Left ventricle myocardium superior (tissue), 1 donor: ENCODE measurements at regions of chr22 and their contacts with region 1.

Region 1: DNA sequence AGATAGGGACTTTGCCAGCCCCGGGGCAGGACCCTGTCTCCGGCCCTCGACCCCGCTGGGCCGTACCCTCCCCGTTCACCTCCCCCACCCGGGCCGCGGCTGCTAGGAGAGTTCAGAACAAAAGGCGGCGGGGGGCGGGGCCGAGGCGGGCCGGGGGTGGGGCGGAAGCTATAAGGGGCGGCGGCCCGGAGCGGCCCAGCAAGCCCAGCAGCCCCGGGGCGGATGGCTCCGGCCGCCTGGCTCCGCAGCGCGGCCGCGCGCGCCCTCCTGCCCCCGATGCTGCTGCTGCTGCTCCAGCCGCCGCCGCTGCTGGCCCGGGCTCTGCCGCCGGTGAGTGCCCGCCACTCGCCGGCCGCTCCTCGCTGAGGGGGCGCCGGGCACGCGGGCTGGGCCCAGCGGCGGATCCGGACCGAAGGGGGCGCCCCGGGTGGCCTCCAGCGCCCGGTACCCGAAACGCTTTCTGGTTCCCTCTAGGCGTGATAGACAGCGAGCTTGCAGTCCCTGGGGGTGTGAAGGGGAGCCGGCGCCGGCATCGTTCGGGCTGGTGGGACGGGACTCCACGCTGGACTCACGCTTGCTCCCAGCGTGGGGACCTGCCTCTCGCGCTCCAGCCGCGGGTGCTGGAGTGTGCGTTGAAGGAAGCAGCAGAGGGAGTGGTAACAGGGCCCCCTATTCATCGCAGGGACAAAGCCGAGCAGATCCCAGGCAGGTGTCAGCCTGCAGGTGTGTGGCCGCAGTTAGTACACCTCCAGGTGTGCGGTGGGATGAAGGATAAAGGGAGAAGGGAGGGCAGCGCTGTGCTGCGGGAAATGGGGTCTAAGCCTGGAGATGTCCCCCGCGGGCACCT is at the start of gene MMP11:
- DNase-seq: peak; percentile 82
- ATAC-seq: peak; percentile 35
- total RNA-seq, gene MMP11: 32.3 TPM

Region 2: GRCh38 chr22:23849009-23850006 is 76.4 kb after region 1 on chr22:
- intact Hi-C with region 1: loop called (anchors 10 kb)
- DNase-seq: peak; percentile 91
- ATAC-seq: peak; percentile 53